GM12878 (cell line): ENCODE measurements at regions of chr16 and their contacts with region 1.

Region 1: GRCh38 chr16:22321339-22322001 is 24.3 kb downstream of the POLR3E start:
- DNase-seq: peak; percentile 36
- ATAC-seq: peak; percentile 91
- H3K4me3 ChIP-seq: no peak overlapping the region
- H3K27ac ChIP-seq: no peak overlapping the region
- H3K4me1 ChIP-seq: no peaks in the 10 kb centered on the region
- H3K27me3 ChIP-seq: no peaks in the 10 kb centered on the region
- CTCF ChIP-seq: peak; percentile 83 to 95 (median 94)
- EP300 ChIP-seq: no peak
- POLR2A ChIP-seq: no peak
- RAD21 ChIP-seq: peak; percentile 97

Region 2: GRCh38 chr16:21526923-21527807 is 794.3 kb before region 1 on chr16:
- CTCF ChIA-PET with region 1: no interaction called
- POLR2A ChIA-PET with region 1: no interaction called
- RAD21 ChIA-PET with region 1: no interaction called
- SMC1A ChIA-PET with region 1: no interaction called
- in situ Hi-C with region 1: loop called (anchors 10 kb)
- intact Hi-C with region 1: no loop called
- DNase-seq: no peak
- ATAC-seq: no peak
- H3K4me3 ChIP-seq: no peak overlapping the region
- H3K27ac ChIP-seq: no peak overlapping the region
- H3K4me1 ChIP-seq: no peaks in the 10 kb centered on the region
- H3K27me3 ChIP-seq: no peaks in the 10 kb centered on the region; a peak in 1 of 4 replicates
- CTCF ChIP-seq: no peak
- EP300 ChIP-seq: no peak
- POLR2A ChIP-seq: no peak
- RAD21 ChIP-seq: no peak

Region 3: DNA sequence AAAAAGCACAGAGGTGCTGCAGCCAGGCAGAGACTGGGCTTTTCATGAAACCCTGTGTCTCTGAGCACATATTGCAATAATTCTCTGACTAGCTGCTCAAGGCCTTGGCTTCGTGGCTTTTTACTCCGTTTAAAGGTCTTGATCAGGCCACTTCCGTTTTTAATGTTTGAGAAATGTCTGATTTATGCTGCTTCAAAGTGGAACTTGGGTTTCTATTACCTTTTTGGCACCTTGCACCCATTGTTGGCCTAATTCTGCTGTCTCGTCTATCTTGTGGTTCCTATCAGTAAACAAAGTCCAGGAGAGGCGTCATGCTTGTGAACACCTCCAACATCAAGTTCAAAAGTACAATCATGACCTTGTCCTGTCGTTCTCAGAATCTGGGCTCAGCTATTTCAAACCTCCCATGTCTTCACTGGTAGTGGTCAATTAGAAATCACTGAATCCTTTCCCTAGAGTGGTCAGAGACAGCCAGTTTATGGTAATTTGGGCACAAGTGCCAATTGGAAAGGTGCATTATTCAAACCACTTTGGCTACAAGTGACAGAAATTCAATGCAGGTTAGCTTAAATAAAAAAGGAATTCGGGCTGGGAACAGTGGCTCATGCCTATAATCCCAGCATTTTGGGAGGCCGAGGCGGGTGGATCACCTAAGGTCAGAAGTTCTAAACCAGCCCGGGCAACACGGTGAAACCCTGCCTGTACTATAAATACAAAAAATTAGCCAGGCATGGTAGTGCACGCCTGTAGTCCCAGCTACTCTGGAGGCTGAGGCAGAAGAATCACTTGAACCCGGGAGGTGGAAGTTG is 755.4 kb before region 1 on chr16:
- CTCF ChIA-PET with region 1: interaction called, 3 read pairs
- POLR2A ChIA-PET with region 1: no interaction called
- RAD21 ChIA-PET with region 1: no interaction called
- SMC1A ChIA-PET with region 1: no interaction called
- in situ Hi-C with region 1: loop called (anchors 10 kb)
- intact Hi-C with region 1: no loop called
- DNase-seq: no peak
- ATAC-seq: peak; percentile 56
- H3K4me3 ChIP-seq: no peak overlapping the region
- H3K27ac ChIP-seq: no peak overlapping the region
- H3K4me1 ChIP-seq: no peaks in the 10 kb centered on the region
- H3K27me3 ChIP-seq: no peaks in the 10 kb centered on the region; a peak in 1 of 4 replicates
- CTCF ChIP-seq: no peak
- EP300 ChIP-seq: no peak
- POLR2A ChIP-seq: no peak
- RAD21 ChIP-seq: no peak

Region 4: DNA sequence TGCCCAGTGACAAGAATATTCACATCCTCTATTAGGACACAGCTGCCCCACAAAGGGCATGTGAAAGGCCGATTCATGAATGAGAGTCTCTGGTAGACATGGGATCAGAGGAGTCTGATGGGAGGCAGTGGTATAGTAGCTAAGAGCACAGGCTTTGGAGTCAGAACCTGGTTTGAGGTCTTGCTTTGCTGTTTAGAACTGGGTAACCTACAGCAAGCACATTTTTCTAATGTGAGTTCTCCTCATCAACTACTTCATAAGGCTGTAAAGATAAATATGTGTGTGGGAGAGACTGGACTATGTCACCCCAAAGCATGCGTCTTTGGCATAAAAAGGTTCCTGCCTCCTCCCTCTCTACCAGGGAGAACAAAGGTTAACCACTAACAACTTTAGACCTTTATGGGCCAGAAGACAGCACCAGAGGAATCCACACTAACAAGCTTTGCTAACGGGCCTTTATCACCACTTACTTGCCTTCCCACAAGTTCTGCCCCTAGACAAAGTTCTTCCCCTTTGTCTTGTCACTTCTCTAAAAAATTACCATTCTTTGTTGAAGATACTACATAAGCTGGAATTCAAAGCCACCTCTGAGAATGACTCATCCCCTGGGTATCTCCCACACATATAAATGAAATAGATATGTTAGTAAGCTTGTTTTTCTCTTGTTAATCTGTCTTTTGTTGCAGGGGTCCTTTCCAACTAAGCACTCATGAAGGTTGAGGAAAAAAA is 31.9 kb after region 1 on chr16:
- CTCF ChIA-PET with region 1: interaction called, 20 read pairs
- POLR2A ChIA-PET with region 1: no interaction called
- RAD21 ChIA-PET with region 1: interaction called, 7 read pairs
- SMC1A ChIA-PET with region 1: interaction called, 3 read pairs
- in situ Hi-C with region 1: no loop called
- intact Hi-C with region 1: no loop called
- DNase-seq: peak; percentile 63
- ATAC-seq: peak; percentile 69
- H3K4me3 ChIP-seq: no peak overlapping the region
- H3K27ac ChIP-seq: peak overlapping the region; percentile 79
- H3K4me1 ChIP-seq: peaks cover 40% of the 10 kb centered on the region
- H3K27me3 ChIP-seq: no peaks in the 10 kb centered on the region
- CTCF ChIP-seq: no peak
- EP300 ChIP-seq: no peak; a peak in 1 of 4 replicates
- POLR2A ChIP-seq: no peak
- RAD21 ChIP-seq: no peak

Region 5: GRCh38 chr16:22374311-22375116 is 53.0 kb after region 1 on chr16 and contains the start of gene CDR2:
- CTCF ChIA-PET with region 1: interaction called, 6 read pairs
- POLR2A ChIA-PET with region 1: no interaction called
- RAD21 ChIA-PET with region 1: interaction called, 5 read pairs
- SMC1A ChIA-PET with region 1: interaction called, 3 read pairs
- in situ Hi-C with region 1: no loop called
- intact Hi-C with region 1: loop called (anchors 5 kb)
- DNase-seq: peak; percentile 81
- ATAC-seq: peak; percentile 97
- H3K4me3 ChIP-seq: peak within 1 kb of the TSS; percentile 89
- H3K27ac ChIP-seq: peak within 1 kb of the TSS; percentile 77
- H3K4me1 ChIP-seq: peaks cover 13% of the 10 kb centered on the region; the same call in 1 of the 2 replicates
- H3K27me3 ChIP-seq: no peaks in the 10 kb centered on the region
- CTCF ChIP-seq: no peak
- EP300 ChIP-seq: no peak
- POLR2A ChIP-seq: peak; percentile 97
- RAD21 ChIP-seq: no peak
- polyA plus RNA-seq, gene CDR2: 4.8 to 5.5 TPM

Region 6: GRCh38 chr16:22670551-22671041 is 349.1 kb after region 1 on chr16:
- CTCF ChIA-PET with region 1: no interaction called
- POLR2A ChIA-PET with region 1: no interaction called
- RAD21 ChIA-PET with region 1: no interaction called
- SMC1A ChIA-PET with region 1: no interaction called
- in situ Hi-C with region 1: loop called (anchors 10 kb)
- intact Hi-C with region 1: no loop called
- DNase-seq: no peak
- ATAC-seq: peak; percentile 60
- H3K4me3 ChIP-seq: no peak overlapping the region
- H3K27ac ChIP-seq: no peak overlapping the region
- H3K4me1 ChIP-seq: no peaks in the 10 kb centered on the region
- H3K27me3 ChIP-seq: no peaks in the 10 kb centered on the region; a peak in 1 of 4 replicates
- CTCF ChIP-seq: no peak
- EP300 ChIP-seq: no peak
- POLR2A ChIP-seq: no peak
- RAD21 ChIP-seq: no peak